ENCODE measurements at regions of chr15 and their contacts with region 1.

Region 1: DNA sequence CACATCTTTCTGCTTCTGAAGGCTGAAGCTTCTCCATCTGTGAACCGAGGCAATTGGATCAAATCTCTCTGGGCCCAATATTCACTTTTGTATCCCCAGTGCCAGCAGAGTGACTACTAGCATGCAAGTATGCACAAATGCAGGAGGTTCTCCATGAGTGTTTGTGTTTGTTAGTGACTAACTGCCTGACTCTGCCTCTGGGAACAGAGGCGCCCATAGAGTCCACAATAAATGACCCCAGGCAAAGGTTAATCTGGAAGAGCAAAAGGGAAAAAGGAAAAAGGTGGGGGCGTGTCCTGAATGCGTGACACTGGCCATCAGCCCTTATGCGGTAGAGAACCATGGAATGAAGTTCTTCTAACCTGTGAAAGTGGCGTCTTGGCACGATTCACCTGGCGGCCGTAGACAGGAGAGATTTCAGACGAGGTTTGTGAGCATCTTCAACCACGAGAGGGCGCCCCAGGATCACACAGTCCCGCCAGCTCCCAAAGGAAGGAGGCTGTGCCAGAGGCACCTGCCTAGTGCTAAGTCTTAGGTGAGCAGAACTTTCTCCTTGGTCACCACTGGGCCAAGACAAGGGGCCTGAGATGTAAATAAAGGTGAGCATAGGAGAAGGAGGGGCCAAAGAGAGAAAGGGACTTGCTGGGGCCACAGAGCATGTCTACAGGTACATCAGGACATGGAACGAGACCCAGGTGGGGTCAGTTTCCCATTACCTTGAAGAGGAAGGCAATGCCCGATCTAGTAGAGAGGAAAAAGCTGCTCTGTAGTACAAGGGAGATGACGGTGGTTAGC is 44.2 kb downstream of the RBPMS2 start:
- DNase-seq: peak; percentile 69 to 97
- H3K4me3 ChIP-seq: peak overlapping the region in 1 of 4 experiments; percentile 14; a peak in 1 of 8 replicates
- H3K27ac ChIP-seq: no peak overlapping the region
- H3K4me1 ChIP-seq: peaks cover 7 to 14% (median 10%) of the 10 kb centered on the region in 4 experiments
- H3K27me3 ChIP-seq: no peaks in the 10 kb centered on the region
- CTCF ChIP-seq: peak; percentile 73 to 97 (median 95)
- EP300 ChIP-seq: 0 out of 3 replicates have a peak, but pooled peaks of 1 of the 2 experiments have one; percentile 24
- POLR2A ChIP-seq: no peak; a peak in 1 of 3 replicates
- RAD21 ChIP-seq: peak; percentile 98

Region 2: GRCh38 chr15:64681424-64682024 is 49.7 kb before region 1 on chr15:
- CTCF ChIA-PET with region 1: interaction called, 262 read pairs
- POLR2A ChIA-PET with region 1: interaction called, 1,192 read pairs
- DNase-seq: peak in 1 of 2 experiments; percentile 41
- H3K4me3 ChIP-seq: no peak overlapping the region
- H3K27ac ChIP-seq: no peak overlapping the region
- H3K4me1 ChIP-seq: peaks cover 0 to 8% (median 1%) of the 10 kb centered on the region in 4 experiments; a peak in 5 of 7 replicates
- H3K27me3 ChIP-seq: no peaks in the 10 kb centered on the region
- CTCF ChIP-seq: peak; percentile 57 to 100 (median 95)
- EP300 ChIP-seq: no peak
- POLR2A ChIP-seq: 0 out of 3 replicates have a peak, but pooled peaks of 1 of the 2 experiments have one; percentile 31
- RAD21 ChIP-seq: peak; percentile 99

Region 3: DNA sequence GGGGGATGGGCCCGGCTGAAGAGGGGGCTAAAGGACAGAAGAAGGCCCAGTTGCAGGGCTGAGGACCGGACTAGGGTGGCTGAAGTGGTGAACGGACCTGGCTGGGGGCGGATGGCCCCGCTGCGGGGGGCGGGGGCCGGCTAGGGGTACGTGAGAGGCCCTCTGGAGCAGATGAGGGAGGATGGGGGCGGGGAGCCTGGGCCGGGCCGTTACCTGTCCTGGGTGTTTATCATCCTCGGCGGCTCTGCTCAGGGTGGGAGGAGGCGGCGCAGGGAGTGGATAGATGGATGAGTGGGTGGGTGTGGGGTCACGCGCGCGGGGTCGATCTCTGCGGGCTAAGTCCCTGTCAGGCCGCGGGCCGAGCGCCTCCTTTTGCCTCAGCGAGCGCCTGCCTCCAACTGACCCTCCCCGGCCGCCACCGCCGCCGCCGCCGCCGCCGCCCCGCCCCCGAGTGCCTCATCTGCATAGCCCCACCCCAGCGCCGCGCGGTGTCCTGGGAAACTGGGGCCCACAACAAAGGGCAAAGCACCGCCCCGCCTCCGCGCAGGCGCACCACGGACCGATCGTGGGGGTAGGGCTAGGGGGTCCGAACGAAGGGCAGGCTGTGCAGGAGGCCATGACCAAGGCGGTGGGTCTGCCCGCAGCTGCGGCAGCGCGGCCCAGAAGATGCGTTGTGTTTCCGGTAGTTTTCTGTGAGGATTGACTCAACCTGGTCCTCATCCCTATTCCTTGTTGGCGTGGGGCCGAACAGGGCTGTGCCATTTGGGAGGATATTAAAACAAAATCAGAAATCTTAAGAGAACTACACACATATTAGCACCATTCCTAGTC is 28.2 kb before region 1 on chr15:
- CTCF ChIA-PET with region 1: interaction called, 28 read pairs
- POLR2A ChIA-PET with region 1: interaction called, 1,192 read pairs
- DNase-seq: peak; percentile 86 to 100
- H3K4me3 ChIP-seq: peak overlapping the region; percentile 70 to 88 (median 85)
- H3K27ac ChIP-seq: peak overlapping the region; percentile 82
- H3K4me1 ChIP-seq: peaks cover 12 to 23% (median 17%) of the 10 kb centered on the region in 4 experiments
- H3K27me3 ChIP-seq: no peaks in the 10 kb centered on the region
- CTCF ChIP-seq: no peak
- EP300 ChIP-seq: peak in 1 of 2 experiments; percentile 51; a peak in 1 of 3 replicates
- POLR2A ChIP-seq: peak; percentile 69 to 90
- RAD21 ChIP-seq: no peak; a peak in 1 of 4 replicates

Region 4: GRCh38 chr15:64717735-64718495 is 13.3 kb before region 1 on chr15:
- CTCF ChIA-PET with region 1: interaction called, 28 read pairs
- POLR2A ChIA-PET with region 1: interaction called, 1,192 read pairs
- DNase-seq: no peak
- H3K4me3 ChIP-seq: no peak overlapping the region
- H3K27ac ChIP-seq: no peak overlapping the region; the same call in 1 of the 2 replicates
- H3K4me1 ChIP-seq: no peaks in the 10 kb centered on the region
- H3K27me3 ChIP-seq: no peaks in the 10 kb centered on the region
- CTCF ChIP-seq: no peak
- EP300 ChIP-seq: no peak
- POLR2A ChIP-seq: no peak
- RAD21 ChIP-seq: no peak

Region 5: GRCh38 chr15:64825431-64826294 is 94.5 kb after region 1 on chr15 and contains the start of gene PIF1:
- CTCF ChIA-PET with region 1: interaction called, 883 read pairs
- POLR2A ChIA-PET with region 1: interaction called, 16 read pairs
- DNase-seq: peak; percentile 85 to 87
- H3K4me3 ChIP-seq: peak within 1 kb of the TSS; percentile 85 to 93 (median 88)
- H3K27ac ChIP-seq: peak within 1 kb of the TSS; percentile 92
- H3K4me1 ChIP-seq: peaks cover 2 to 9% (median 5%) of the 10 kb centered on the region in 4 experiments; a peak in 6 of 7 replicates
- H3K27me3 ChIP-seq: no peaks in the 10 kb centered on the region
- CTCF ChIP-seq: no peak
- EP300 ChIP-seq: peak in 1 of 2 experiments; percentile 96; a peak in 1 of 3 replicates
- POLR2A ChIP-seq: peak; percentile 84 to 97
- RAD21 ChIP-seq: 0 out of 4 replicates have a peak, but pooled peaks of 1 of the 2 experiments have one; percentile 8
- total RNA-seq, gene PIF1: 136 and 138 TPM in 2 replicates

Region 6: DNA sequence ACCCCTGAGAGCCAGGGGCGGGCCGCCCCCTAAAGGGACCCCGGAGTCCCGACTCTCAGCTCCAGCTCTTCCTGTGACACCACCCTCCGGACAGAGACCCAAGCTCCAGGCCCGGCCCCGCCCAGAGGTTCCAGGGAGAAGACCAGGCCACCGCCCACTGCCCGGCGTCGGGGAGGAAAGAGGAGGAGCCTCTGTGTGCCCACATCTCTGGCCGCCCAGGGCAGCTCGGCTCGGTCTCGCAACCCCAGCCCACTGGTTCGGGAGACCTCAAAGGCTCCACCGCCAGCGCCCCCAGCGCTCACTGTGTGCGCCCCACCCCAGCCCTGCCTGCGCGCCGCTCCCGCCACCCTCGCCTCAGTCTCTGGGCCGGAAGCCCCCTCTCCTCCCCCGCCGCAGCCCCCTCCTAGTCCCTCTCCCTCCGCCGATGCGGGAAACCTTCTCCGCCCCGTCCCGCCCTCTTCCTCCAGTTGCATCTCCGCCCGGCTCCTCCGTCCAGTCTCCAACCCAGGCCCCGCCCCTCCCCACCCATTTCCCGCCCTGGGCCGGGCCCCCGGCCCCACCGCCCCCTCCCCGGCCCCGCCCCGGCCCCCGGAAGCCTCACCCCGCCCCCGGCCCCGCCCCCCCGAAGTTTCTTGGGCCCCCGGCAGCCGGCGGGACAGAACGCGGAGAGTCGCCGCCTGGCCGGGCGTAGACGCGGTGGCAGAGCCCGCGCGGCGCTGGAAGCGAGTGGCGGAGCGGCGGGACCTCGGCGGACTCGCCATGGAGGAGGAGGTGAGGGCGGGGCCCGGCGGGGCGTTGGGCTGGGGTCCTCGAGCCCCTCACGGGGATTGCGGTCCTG is 110.3 kb after region 1 on chr15 and contains the start of gene PLEKHO2:
- CTCF ChIA-PET with region 1: interaction called, 18 read pairs
- POLR2A ChIA-PET with region 1: interaction called, 7 read pairs
- DNase-seq: peak; percentile 87 to 94
- H3K4me3 ChIP-seq: peak within 1 kb of the TSS; percentile 90 to 99 (median 92)
- H3K27ac ChIP-seq: peak within 1 kb of the TSS; percentile 59; the same call in 1 of the 2 replicates
- H3K4me1 ChIP-seq: peaks cover 13 to 25% (median 17%) of the 10 kb centered on the region in 4 experiments; a peak in 6 of 7 replicates
- H3K27me3 ChIP-seq: no peaks in the 10 kb centered on the region
- CTCF ChIP-seq: peak; percentile 20 to 30 (median 28); a peak in 2 of 4 replicates
- EP300 ChIP-seq: no peak
- POLR2A ChIP-seq: peak; percentile 63 to 64
- RAD21 ChIP-seq: peak; percentile 11 to 15; a peak in 3 of 4 replicates
- total RNA-seq, gene PLEKHO2: 20.1 and 20.3 TPM in 2 replicates

Region 7: GRCh38 chr15:64950888-64951287 is 219.7 kb after region 1 on chr15:
- CTCF ChIA-PET with region 1: no interaction called
- POLR2A ChIA-PET with region 1: no interaction called
- DNase-seq: peak in 1 of 2 experiments; percentile 40
- H3K4me3 ChIP-seq: no peak overlapping the region
- H3K27ac ChIP-seq: no peak overlapping the region
- H3K4me1 ChIP-seq: no peaks in the 10 kb centered on the region
- H3K27me3 ChIP-seq: no peaks in the 10 kb centered on the region
- CTCF ChIP-seq: no peak
- EP300 ChIP-seq: no peak
- POLR2A ChIP-seq: no peak
- RAD21 ChIP-seq: no peak

Region 8: DNA sequence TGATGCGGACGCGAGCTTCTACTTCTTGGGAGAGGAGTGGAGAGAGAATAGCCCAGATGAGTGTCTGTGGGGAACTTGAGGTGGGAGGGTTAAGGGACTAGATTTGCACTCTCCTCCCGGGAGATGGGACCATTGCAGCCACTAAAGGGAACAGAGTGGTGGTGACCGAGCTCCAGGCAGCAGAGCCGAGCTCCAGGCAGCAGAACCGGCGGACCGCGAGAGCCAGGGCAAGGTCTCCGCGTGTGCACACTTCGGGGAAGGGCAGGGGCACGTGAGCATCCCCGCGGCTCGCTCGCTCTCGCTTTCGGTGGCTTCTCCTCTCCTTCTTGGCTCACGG is 645.5 kb after region 1 on chr15:
- CTCF ChIA-PET with region 1: no interaction called
- POLR2A ChIA-PET with region 1: no interaction called
- DNase-seq: no peak
- H3K4me3 ChIP-seq: peak overlapping the region; percentile 58 to 89 (median 80)
- H3K27ac ChIP-seq: no peak overlapping the region
- H3K4me1 ChIP-seq: peaks cover 8 to 25% (median 16%) of the 10 kb centered on the region in 4 experiments
- H3K27me3 ChIP-seq: peaks cover 0 to 20% (median 10%) of the 10 kb centered on the region in 4 experiments; a peak in 5 of 7 replicates
- CTCF ChIP-seq: no peak
- EP300 ChIP-seq: no peak
- POLR2A ChIP-seq: no peak
- RAD21 ChIP-seq: no peak